B cell (primary cell): ENCODE measurements at regions of chr20 and their contacts with region 1.

Region 1: GRCh38 chr20:63537525-63538203 is 488 bp upstream of the PTK6 start:
- DNase-seq: peak; percentile 97
- ATAC-seq: peak; percentile 85
- H3K4me3 ChIP-seq: peak overlapping the region in 4 of 5 experiments; percentile 55 to 67 (median 58)
- H3K4me3 Mint-ChIP-seq: peak overlapping the region; percentile 86
- H3K27ac ChIP-seq: peak overlapping the region; percentile 83 to 86
- H3K27ac Mint-ChIP-seq: peak overlapping the region; percentile 92
- H3K4me1 ChIP-seq: peaks cover 30 to 45% of the 10 kb centered on the region in 2 donors
- H3K4me1 Mint-ChIP-seq: peaks cover 34% of the 10 kb centered on the region
- H3K27me3 ChIP-seq: no peaks in the 10 kb centered on the region
- H3K27me3 Mint-ChIP-seq: no peaks in the 10 kb centered on the region
- CTCF ChIP-seq: peak; percentile 99

Region 2: GRCh38 chr20:63457737-63458136 is 79.9 kb before region 1 on chr20:
- CTCF ChIA-PET with region 1: no interaction called
- POLR2A ChIA-PET with region 1: no interaction called
- intact Hi-C with region 1: no loop called
- DNase-seq: no peak
- ATAC-seq: peak; percentile 44
- H3K4me3 ChIP-seq: no peak overlapping the region
- H3K4me3 Mint-ChIP-seq: no peak overlapping the region
- H3K27ac ChIP-seq: no peak overlapping the region
- H3K27ac Mint-ChIP-seq: no peak overlapping the region
- H3K4me1 ChIP-seq: peaks cover 7 to 16% of the 10 kb centered on the region in 2 donors
- H3K4me1 Mint-ChIP-seq: peaks cover 11% of the 10 kb centered on the region
- H3K27me3 ChIP-seq: peaks cover 0 to 19% (median 6%) of the 10 kb centered on the region in 4 experiments
- H3K27me3 Mint-ChIP-seq: peaks cover 27% of the 10 kb centered on the region
- CTCF ChIP-seq: no peak

Region 3: DNA sequence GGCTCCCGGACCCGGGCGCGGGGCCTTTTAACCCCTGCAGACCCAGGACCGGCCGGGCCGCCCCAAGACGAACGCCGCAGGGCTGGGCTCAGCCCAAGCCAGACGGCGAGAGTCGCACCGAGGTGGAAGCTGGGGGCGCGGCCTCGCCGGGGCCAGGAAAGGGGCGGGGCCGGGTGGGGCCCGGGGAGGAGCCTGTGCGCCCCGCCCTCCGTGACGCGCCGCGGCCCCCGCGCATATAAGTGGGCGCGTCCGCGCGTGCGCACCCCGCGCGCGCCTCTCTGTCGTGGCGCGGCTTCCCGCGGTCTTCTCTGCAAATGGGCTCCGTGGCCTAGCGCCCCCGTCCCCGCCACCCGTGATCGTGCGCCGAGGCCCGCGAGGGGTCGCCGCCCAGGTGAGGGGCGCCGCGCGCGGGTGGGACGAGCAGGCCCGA is 17.1 kb before region 1 on chr20 and contains the start of gene PPDPF:
- CTCF ChIA-PET with region 1: interaction called, 25 read pairs
- POLR2A ChIA-PET with region 1: interaction called, 42 read pairs
- intact Hi-C with region 1: loop called (anchors 1 kb)
- DNase-seq: peak; percentile 92
- ATAC-seq: peak; percentile 81
- H3K4me3 ChIP-seq: peak within 1 kb of the TSS; percentile 21 to 79 (median 74)
- H3K4me3 Mint-ChIP-seq: peak within 1 kb of the TSS; percentile 86
- H3K27ac ChIP-seq: peak within 1 kb of the TSS; percentile 63 to 76
- H3K27ac Mint-ChIP-seq: peak within 1 kb of the TSS; percentile 90
- H3K4me1 ChIP-seq: peaks cover 16 to 23% of the 10 kb centered on the region in 2 donors
- H3K4me1 Mint-ChIP-seq: peaks cover 31% of the 10 kb centered on the region
- H3K27me3 ChIP-seq: peaks cover 0 to 10% (median 3%) of the 10 kb centered on the region in 4 experiments
- H3K27me3 Mint-ChIP-seq: peaks cover 4% of the 10 kb centered on the region
- CTCF ChIP-seq: no peak
- total RNA-seq, gene PPDPF: 149 and 162 TPM in 2 replicates

Region 4: GRCh38 chr20:63574156-63574828 is 36.6 kb after region 1 on chr20 and contains the start of gene HELZ2:
- CTCF ChIA-PET with region 1: interaction called, 17 read pairs
- POLR2A ChIA-PET with region 1: interaction called, 10 read pairs
- intact Hi-C with region 1: loop called (anchors 1 kb)
- DNase-seq: peak; percentile 82
- ATAC-seq: peak; percentile 93
- H3K4me3 ChIP-seq: peak within 1 kb of the TSS; percentile 61 to 86 (median 79)
- H3K4me3 Mint-ChIP-seq: peak within 1 kb of the TSS; percentile 87
- H3K27ac ChIP-seq: peak within 1 kb of the TSS; percentile 71 to 86
- H3K27ac Mint-ChIP-seq: peak within 1 kb of the TSS; percentile 83
- H3K4me1 ChIP-seq: peaks cover 21 to 38% of the 10 kb centered on the region in 2 donors
- H3K4me1 Mint-ChIP-seq: peaks cover 9% of the 10 kb centered on the region
- H3K27me3 ChIP-seq: no peaks in the 10 kb centered on the region
- H3K27me3 Mint-ChIP-seq: no peaks in the 10 kb centered on the region
- CTCF ChIP-seq: no peak
- total RNA-seq, gene HELZ2: 52.6 and 53.7 TPM in 2 replicates

Region 5: DNA sequence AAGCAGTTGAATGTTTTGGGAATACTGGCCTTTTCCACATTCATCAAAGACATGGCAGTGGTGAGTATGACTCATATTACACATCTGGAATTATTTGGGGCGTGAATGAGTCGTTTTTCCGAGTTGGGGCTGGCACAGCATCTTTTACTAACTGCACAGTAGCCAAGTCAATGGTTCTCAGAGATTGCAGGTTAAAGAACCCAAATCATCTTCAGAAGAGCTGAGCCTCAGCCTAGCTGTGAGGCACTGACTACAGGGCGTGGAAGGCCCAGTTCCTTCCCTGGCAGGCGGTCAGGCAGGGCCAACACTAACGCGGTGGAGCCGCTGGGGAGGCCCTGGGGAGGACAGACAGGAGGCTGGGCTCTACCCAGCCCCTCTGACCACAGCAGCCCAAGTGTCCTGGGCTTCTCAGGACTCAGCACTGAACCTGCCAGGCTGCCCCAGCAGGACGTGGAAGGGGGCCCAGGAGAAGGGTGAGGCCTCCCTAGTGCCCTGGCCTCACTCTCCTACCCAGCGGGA is 56.4 kb after region 1 on chr20:
- CTCF ChIA-PET with region 1: no interaction called
- POLR2A ChIA-PET with region 1: no interaction called
- intact Hi-C with region 1: no loop called
- DNase-seq: no peak
- ATAC-seq: no peak
- H3K4me3 ChIP-seq: no peak overlapping the region
- H3K4me3 Mint-ChIP-seq: no peak overlapping the region
- H3K27ac ChIP-seq: no peak overlapping the region
- H3K27ac Mint-ChIP-seq: no peak overlapping the region
- H3K4me1 ChIP-seq: no peaks in the 10 kb centered on the region
- H3K4me1 Mint-ChIP-seq: no peaks in the 10 kb centered on the region
- H3K27me3 ChIP-seq: no peaks in the 10 kb centered on the region
- H3K27me3 Mint-ChIP-seq: no peaks in the 10 kb centered on the region
- CTCF ChIP-seq: no peak

Region 6: GRCh38 chr20:63657937-63658748 is 120.5 kb after region 1 on chr20 and contains the start of gene RTEL1:
- CTCF ChIA-PET with region 1: interaction called, 17 read pairs
- POLR2A ChIA-PET with region 1: interaction called, 6 read pairs
- intact Hi-C with region 1: loop called (anchors 1 kb)
- DNase-seq: peak; percentile 95
- ATAC-seq: peak; percentile 91
- H3K4me3 ChIP-seq: peak within 1 kb of the TSS; percentile 51 to 94 (median 84)
- H3K4me3 Mint-ChIP-seq: peak within 1 kb of the TSS; percentile 98
- H3K27ac ChIP-seq: peak within 1 kb of the TSS; percentile 47 to 70
- H3K27ac Mint-ChIP-seq: peak within 1 kb of the TSS; percentile 96
- H3K4me1 ChIP-seq: peaks cover 21 to 36% of the 10 kb centered on the region in 2 donors
- H3K4me1 Mint-ChIP-seq: peaks cover 21% of the 10 kb centered on the region
- H3K27me3 ChIP-seq: peaks cover 0 to 28% (median 10%) of the 10 kb centered on the region in 4 experiments
- H3K27me3 Mint-ChIP-seq: no peaks in the 10 kb centered on the region
- CTCF ChIP-seq: no peak
- total RNA-seq, gene RTEL1: 32.6 and 35.3 TPM in 2 replicates

Region 7: GRCh38 chr20:63785691-63786131 is 248.0 kb after region 1 on chr20:
- CTCF ChIA-PET with region 1: interaction called, 13 read pairs
- POLR2A ChIA-PET with region 1: interaction called, 4 read pairs
- intact Hi-C with region 1: no loop called
- DNase-seq: no peak
- ATAC-seq: no peak
- H3K4me3 ChIP-seq: no peak overlapping the region
- H3K4me3 Mint-ChIP-seq: no peak overlapping the region
- H3K27ac ChIP-seq: no peak overlapping the region
- H3K27ac Mint-ChIP-seq: no peak overlapping the region
- H3K4me1 ChIP-seq: no peaks in the 10 kb centered on the region
- H3K4me1 Mint-ChIP-seq: peaks cover 3% of the 10 kb centered on the region
- H3K27me3 ChIP-seq: no peaks in the 10 kb centered on the region
- H3K27me3 Mint-ChIP-seq: no peaks in the 10 kb centered on the region
- CTCF ChIP-seq: no peak

Region 8: GRCh38 chr20:63973636-63974402 is 436.2 kb after region 1 on chr20:
- CTCF ChIA-PET with region 1: interaction called, 18 read pairs
- POLR2A ChIA-PET with region 1: no interaction called
- intact Hi-C with region 1: loop called (anchors 1 kb)
- DNase-seq: peak; percentile 83
- ATAC-seq: peak; percentile 67
- H3K4me3 ChIP-seq: no peak overlapping the region
- H3K4me3 Mint-ChIP-seq: no peak overlapping the region
- H3K27ac ChIP-seq: no peak overlapping the region
- H3K27ac Mint-ChIP-seq: no peak overlapping the region
- H3K4me1 ChIP-seq: peaks cover 20 to 32% of the 10 kb centered on the region in 2 donors
- H3K4me1 Mint-ChIP-seq: peaks cover 26% of the 10 kb centered on the region
- H3K27me3 ChIP-seq: no peaks in the 10 kb centered on the region
- H3K27me3 Mint-ChIP-seq: no peaks in the 10 kb centered on the region
- CTCF ChIP-seq: peak; percentile 98